ENCODE measurements at regions of chr4 and their contacts with region 1.

Region 1: GRCh38 chr4:21765810-21766407 is 182.7 kb downstream of the KCNIP4 start:
- DNase-seq: peak; percentile 25
- H3K4me3 ChIP-seq: no peak overlapping the region; a peak in 1 of 4 replicates
- H3K27ac ChIP-seq: peak overlapping the region in 1 of 2 experiments; percentile 99; a peak in 2 of 4 replicates
- H3K4me1 ChIP-seq: peaks cover 8 to 29% of the 10 kb centered on the region in 2 experiments; a peak in 3 of 4 replicates
- H3K27me3 ChIP-seq: no peaks in the 10 kb centered on the region
- CTCF ChIP-seq: peak; percentile 93
- EP300 ChIP-seq: no peak
- RAD21 ChIP-seq: peak; percentile 92

Region 2: GRCh38 chr4:20773144-20773997 is 992.5 kb before region 1 on chr4:
- CTCF ChIA-PET with region 1: interaction called, 17 read pairs
- POLR2A ChIA-PET with region 1: no interaction called
- DNase-seq: peak; percentile 52
- H3K4me3 ChIP-seq: peak overlapping the region in 1 of 2 experiments; percentile 17; a peak in 1 of 4 replicates
- H3K27ac ChIP-seq: no peak overlapping the region
- H3K4me1 ChIP-seq: peaks cover 0 to 2% of the 10 kb centered on the region in 2 experiments; a peak in 2 of 4 replicates
- H3K27me3 ChIP-seq: no peaks in the 10 kb centered on the region
- CTCF ChIP-seq: peak; percentile 78
- EP300 ChIP-seq: no peak
- RAD21 ChIP-seq: peak; percentile 88

Region 3: GRCh38 chr4:21490682-21491081 is 275.2 kb before region 1 on chr4:
- CTCF ChIA-PET with region 1: interaction called, 12 read pairs
- POLR2A ChIA-PET with region 1: no interaction called
- DNase-seq: no peak
- H3K4me3 ChIP-seq: no peak overlapping the region
- H3K27ac ChIP-seq: no peak overlapping the region; a peak in 1 of 4 replicates
- H3K4me1 ChIP-seq: peaks cover 0 to 3% of the 10 kb centered on the region in 2 experiments; a peak in 2 of 4 replicates
- H3K27me3 ChIP-seq: no peaks in the 10 kb centered on the region
- CTCF ChIP-seq: no peak
- EP300 ChIP-seq: no peak
- RAD21 ChIP-seq: no peak

Region 4: DNA sequence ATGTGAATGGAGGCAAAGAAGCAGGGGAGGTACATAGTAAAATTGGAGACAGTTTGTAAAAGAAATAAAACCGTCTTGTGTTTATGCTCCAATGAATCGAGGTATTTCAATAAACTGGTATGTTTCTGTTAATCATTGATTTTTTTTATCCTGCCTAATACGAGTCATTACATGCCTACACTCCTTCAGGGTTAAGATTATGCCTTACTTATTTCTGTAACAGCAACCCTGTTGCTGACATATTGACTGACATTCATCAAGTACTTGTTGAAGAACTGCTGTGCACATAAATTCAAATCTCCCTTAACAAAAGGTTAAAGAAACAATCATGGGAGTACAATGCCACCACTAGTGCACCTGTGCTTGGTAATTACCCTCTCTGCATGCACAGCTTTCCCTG is 248.4 kb before region 1 on chr4:
- CTCF ChIA-PET with region 1: interaction called, 234 read pairs
- POLR2A ChIA-PET with region 1: no interaction called
- DNase-seq: no peak
- H3K4me3 ChIP-seq: no peak overlapping the region
- H3K27ac ChIP-seq: no peak overlapping the region
- H3K4me1 ChIP-seq: peaks cover 0 to 6% of the 10 kb centered on the region in 2 experiments; a peak in 2 of 4 replicates
- H3K27me3 ChIP-seq: no peaks in the 10 kb centered on the region
- CTCF ChIP-seq: no peak
- EP300 ChIP-seq: no peak
- RAD21 ChIP-seq: no peak

Region 5: GRCh38 chr4:21733894-21734630 is 31.8 kb before region 1 on chr4:
- CTCF ChIA-PET with region 1: interaction called, 10 read pairs
- POLR2A ChIA-PET with region 1: interaction called, 5 read pairs
- DNase-seq: peak; percentile 67
- H3K4me3 ChIP-seq: no peak overlapping the region
- H3K27ac ChIP-seq: peak overlapping the region; percentile 4 to 98; a peak in 3 of 4 replicates
- H3K4me1 ChIP-seq: peaks cover 0 to 29% of the 10 kb centered on the region in 2 experiments; a peak in 2 of 4 replicates
- H3K27me3 ChIP-seq: no peaks in the 10 kb centered on the region
- CTCF ChIP-seq: no peak
- EP300 ChIP-seq: peak; percentile 48 to 100; a peak in 3 of 4 replicates
- RAD21 ChIP-seq: peak; percentile 41

Measured in SK-N-SH (cell line).